Activated CD8-positive, alpha-beta T cell treated with anti-CD3 and anti-CD28 coated beads for 36 hours (primary cell): ENCODE measurements at regions of chr22 and their contacts with region 1.

Region 1: GRCh38 chr22:27686534-27686933 is 115.0 kb downstream of the MN1 start:
- DNase-seq: no peak
- ATAC-seq: no peak
- H3K4me3 Mint-ChIP-seq: no peak overlapping the region
- H3K27ac Mint-ChIP-seq: no peak overlapping the region
- H3K4me1 Mint-ChIP-seq: no peaks in the 10 kb centered on the region
- H3K27me3 Mint-ChIP-seq: no peaks in the 10 kb centered on the region
- CTCF ChIP-seq: no peak

Region 2: GRCh38 chr22:27730654-27731433 is 44.3 kb after region 1 on chr22:
- CTCF ChIA-PET with region 1: no interaction called
- POLR2A ChIA-PET with region 1: no interaction called
- intact Hi-C with region 1: loop called (anchors 10 kb)
- DNase-seq: no peak
- ATAC-seq: no peak
- H3K4me3 Mint-ChIP-seq: no peak overlapping the region
- H3K27ac Mint-ChIP-seq: no peak overlapping the region
- H3K4me1 Mint-ChIP-seq: no peaks in the 10 kb centered on the region
- H3K27me3 Mint-ChIP-seq: peaks cover 4% of the 10 kb centered on the region
- CTCF ChIP-seq: no peak